ENCODE measurements at regions of chrX and their contacts with region 1.

Region 1: GRCh38 chrX:49915361-49916222 is 6.8 kb upstream of the CLCN5 start:
- DNase-seq: peak; percentile 57
- ATAC-seq: peak; percentile 57
- H3K4me3 Mint-ChIP-seq: no peak overlapping the region
- H3K27ac Mint-ChIP-seq: no peak overlapping the region
- H3K4me1 Mint-ChIP-seq: peaks cover under 1% of the 10 kb centered on the region
- H3K27me3 Mint-ChIP-seq: no peaks in the 10 kb centered on the region

Region 2: GRCh38 chrX:50081282-50081889 is 165.8 kb after region 1 on chrX:
- CTCF ChIA-PET with region 1: no interaction called
- POLR2A ChIA-PET with region 1: no interaction called
- intact Hi-C with region 1: loop called (anchors 5 to 10 kb)
- DNase-seq: peak; percentile 18
- ATAC-seq: no peak
- H3K4me3 Mint-ChIP-seq: no peak overlapping the region
- H3K27ac Mint-ChIP-seq: no peak overlapping the region
- H3K4me1 Mint-ChIP-seq: no peaks in the 10 kb centered on the region
- H3K27me3 Mint-ChIP-seq: no peaks in the 10 kb centered on the region

Region 3: DNA sequence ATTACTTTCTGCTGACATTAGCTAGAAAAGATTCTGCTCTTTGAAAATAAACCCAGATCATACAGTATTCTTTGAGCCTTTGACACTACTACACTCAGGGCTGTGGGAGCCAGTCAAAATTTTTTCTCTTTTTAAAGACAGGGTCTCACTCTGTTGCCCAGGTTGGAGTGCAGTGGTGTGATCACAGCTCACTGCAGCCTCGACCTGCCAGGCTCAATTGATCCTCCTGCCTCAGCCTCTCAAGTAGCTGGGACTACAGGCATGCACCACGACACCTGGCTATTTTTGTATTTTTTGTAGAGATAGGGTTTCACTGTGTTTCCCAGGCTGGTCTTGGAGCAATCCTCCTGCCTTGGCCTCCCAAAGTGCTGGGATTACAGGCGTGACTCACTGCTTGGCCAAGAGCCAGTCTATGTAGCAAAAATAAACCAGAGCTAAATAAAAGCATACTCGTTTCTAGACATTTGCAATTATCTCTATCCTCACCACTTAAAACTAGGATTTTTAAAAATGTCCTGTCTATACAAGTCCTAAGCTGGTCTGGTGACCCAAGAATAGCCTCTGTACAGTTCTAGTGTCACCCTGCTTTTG is 242.0 kb after region 1 on chrX:
- CTCF ChIA-PET with region 1: no interaction called
- POLR2A ChIA-PET with region 1: no interaction called
- intact Hi-C with region 1: no loop called
- DNase-seq: no peak
- ATAC-seq: no peak
- H3K4me3 Mint-ChIP-seq: no peak overlapping the region
- H3K27ac Mint-ChIP-seq: no peak overlapping the region
- H3K4me1 Mint-ChIP-seq: no peaks in the 10 kb centered on the region
- H3K27me3 Mint-ChIP-seq: no peaks in the 10 kb centered on the region

Region 4: GRCh38 chrX:50448565-50448964 is 533.0 kb after region 1 on chrX:
- CTCF ChIA-PET with region 1: no interaction called
- POLR2A ChIA-PET with region 1: no interaction called
- intact Hi-C with region 1: loop called in 1 of 2 experiments (anchors 2 kb)
- DNase-seq: peak; percentile 18
- ATAC-seq: peak; percentile 42
- H3K4me3 Mint-ChIP-seq: no peak overlapping the region
- H3K27ac Mint-ChIP-seq: no peak overlapping the region
- H3K4me1 Mint-ChIP-seq: no peaks in the 10 kb centered on the region
- H3K27me3 Mint-ChIP-seq: peaks cover 10% of the 10 kb centered on the region

Region 5: GRCh38 chrX:50579955-50580354 is 664.4 kb after region 1 on chrX:
- CTCF ChIA-PET with region 1: interaction called, 3 read pairs
- POLR2A ChIA-PET with region 1: no interaction called
- intact Hi-C with region 1: loop called (anchors 2 to 10 kb)
- DNase-seq: peak; percentile 26
- ATAC-seq: no peak
- H3K4me3 Mint-ChIP-seq: no peak overlapping the region
- H3K27ac Mint-ChIP-seq: no peak overlapping the region
- H3K4me1 Mint-ChIP-seq: no peaks in the 10 kb centered on the region
- H3K27me3 Mint-ChIP-seq: peaks cover 6% of the 10 kb centered on the region